ENCODE measurements at regions of chr3 and their contacts with region 1.

Region 1: GRCh38 chr3:69324362-69325025 is 61.4 kb downstream of the FRMD4B start:
- DNase-seq: peak; percentile 74
- H3K4me3 Mint-ChIP-seq: no peak overlapping the region
- H3K27ac Mint-ChIP-seq: peak overlapping the region; percentile 94
- H3K4me1 Mint-ChIP-seq: peaks cover 53% of the 10 kb centered on the region
- H3K27me3 Mint-ChIP-seq: no peaks in the 10 kb centered on the region

Region 2: GRCh38 chr3:69084326-69085167 is 239.9 kb before region 1 on chr3 and contains the start of gene ARL6IP5:
- intact Hi-C with region 1: loop called (anchors 2 kb)
- DNase-seq: peak; percentile 97
- H3K4me3 Mint-ChIP-seq: peak within 1 kb of the TSS; percentile 96
- H3K27ac Mint-ChIP-seq: peak within 1 kb of the TSS; percentile 95
- H3K4me1 Mint-ChIP-seq: peaks cover 45% of the 10 kb centered on the region
- H3K27me3 Mint-ChIP-seq: no peaks in the 10 kb centered on the region
- total RNA-seq, gene ARL6IP5: 118 and 122 TPM in 2 replicates

Region 3: DNA sequence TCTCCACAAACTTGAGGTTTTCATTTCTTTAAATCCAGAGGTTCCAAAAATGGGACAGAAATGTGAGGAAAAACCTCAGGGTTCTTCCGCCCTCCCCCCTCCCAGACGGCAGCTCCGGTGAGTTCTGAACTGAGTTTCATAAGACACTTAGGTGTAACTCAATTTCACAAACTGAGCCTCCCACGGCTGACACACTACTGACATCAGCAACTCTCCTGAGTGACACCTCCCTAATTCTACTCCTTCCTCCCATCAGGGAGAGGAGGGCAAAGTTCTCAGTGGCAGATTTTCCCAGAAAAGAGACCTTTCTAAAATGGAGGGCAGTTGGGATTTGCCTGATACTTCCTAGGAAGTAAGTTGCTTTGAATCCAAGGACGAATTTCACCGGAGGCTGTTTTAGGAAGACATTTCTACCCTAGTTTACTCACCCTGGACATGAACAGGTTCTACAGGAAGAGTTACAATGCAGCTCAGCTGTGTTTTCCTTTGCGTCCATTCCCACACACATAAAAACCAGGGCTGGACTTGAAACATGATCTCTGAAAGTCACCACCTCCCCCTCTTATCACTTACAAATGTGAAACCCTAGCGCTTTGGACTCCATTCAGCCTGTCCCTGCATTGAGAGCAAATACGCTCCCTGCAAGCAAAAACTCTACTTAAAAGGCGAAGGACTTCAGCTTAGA is 124.0 kb before region 1 on chr3:
- intact Hi-C with region 1: loop called (anchors 1 kb)
- DNase-seq: peak; percentile 83
- H3K4me3 Mint-ChIP-seq: peak overlapping the region; percentile 90
- H3K27ac Mint-ChIP-seq: peak overlapping the region; percentile 99
- H3K4me1 Mint-ChIP-seq: peaks cover 59% of the 10 kb centered on the region
- H3K27me3 Mint-ChIP-seq: no peaks in the 10 kb centered on the region

Region 4: DNA sequence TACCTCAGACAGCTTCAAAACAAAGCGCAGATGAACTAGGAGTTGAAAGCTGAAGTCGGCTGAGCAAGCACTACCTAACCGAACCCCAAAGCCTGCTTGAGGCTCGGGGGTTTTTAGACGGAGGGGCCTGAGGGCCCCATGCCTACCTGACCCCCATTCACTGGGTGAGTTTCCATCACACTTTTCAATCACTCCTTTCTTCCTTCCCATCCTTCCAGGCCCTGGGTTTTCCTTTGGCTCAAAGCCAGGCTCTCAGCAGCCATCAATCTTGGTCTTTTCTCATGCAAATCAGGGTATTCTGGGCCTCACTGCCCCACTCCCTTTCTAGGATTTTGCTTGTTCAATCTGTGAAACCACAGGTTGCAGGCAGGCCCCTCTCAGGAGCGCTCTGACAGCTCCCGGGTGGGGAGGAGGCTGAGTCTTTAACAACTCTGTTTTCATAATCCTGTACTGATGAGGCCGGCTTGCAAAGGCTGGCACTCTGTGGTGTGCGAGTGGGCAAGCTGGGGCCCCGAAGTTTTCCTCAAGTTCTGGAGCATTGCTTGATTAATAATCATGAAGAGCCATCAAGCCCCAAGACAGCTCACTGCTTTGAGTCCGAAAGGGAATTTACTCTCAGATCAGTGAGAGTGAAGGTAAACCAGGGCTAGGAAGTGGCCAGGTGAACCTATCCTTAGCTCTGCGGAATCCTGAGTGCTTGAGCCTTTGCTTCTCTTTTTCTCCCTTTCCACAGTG is 36.2 kb before region 1 on chr3:
- intact Hi-C with region 1: loop called (anchors 2 kb)
- DNase-seq: no peak
- H3K4me3 Mint-ChIP-seq: peak overlapping the region; percentile 16
- H3K27ac Mint-ChIP-seq: peak overlapping the region; percentile 58
- H3K4me1 Mint-ChIP-seq: peaks cover 10% of the 10 kb centered on the region
- H3K27me3 Mint-ChIP-seq: no peaks in the 10 kb centered on the region

Region 5: DNA sequence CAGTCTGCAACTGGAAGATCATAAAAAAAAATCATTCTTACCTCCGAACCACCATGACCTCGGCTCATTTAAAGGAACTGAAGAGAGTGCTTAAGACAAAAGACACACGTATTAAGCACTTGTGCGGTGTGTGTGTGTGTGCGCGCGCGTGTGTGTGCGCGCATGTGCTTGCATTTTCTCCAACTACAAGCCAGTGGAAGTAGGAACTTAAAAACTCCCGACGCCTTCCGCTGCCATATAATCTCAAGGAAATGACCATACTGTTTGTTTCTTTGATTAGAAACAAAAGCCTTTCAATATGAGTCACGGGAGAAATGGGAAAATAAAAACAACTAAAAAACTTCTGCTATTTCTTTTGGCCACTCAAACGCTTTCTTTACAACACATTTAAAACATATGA is 29.0 kb after region 1 on chr3:
- intact Hi-C with region 1: loop called (anchors 1 kb)
- DNase-seq: peak; percentile 63
- H3K4me3 Mint-ChIP-seq: peak overlapping the region; percentile 84
- H3K27ac Mint-ChIP-seq: peak overlapping the region; percentile 59
- H3K4me1 Mint-ChIP-seq: peaks cover 18% of the 10 kb centered on the region
- H3K27me3 Mint-ChIP-seq: peaks cover 11% of the 10 kb centered on the region

Region 6: GRCh38 chr3:69410250-69410649 is 85.8 kb after region 1 on chr3:
- intact Hi-C with region 1: loop called (anchors 1 kb)
- DNase-seq: peak; percentile 91
- H3K4me3 Mint-ChIP-seq: no peak overlapping the region
- H3K27ac Mint-ChIP-seq: no peak overlapping the region
- H3K4me1 Mint-ChIP-seq: peaks cover 11% of the 10 kb centered on the region
- H3K27me3 Mint-ChIP-seq: peaks cover 7% of the 10 kb centered on the region

Region 7: DNA sequence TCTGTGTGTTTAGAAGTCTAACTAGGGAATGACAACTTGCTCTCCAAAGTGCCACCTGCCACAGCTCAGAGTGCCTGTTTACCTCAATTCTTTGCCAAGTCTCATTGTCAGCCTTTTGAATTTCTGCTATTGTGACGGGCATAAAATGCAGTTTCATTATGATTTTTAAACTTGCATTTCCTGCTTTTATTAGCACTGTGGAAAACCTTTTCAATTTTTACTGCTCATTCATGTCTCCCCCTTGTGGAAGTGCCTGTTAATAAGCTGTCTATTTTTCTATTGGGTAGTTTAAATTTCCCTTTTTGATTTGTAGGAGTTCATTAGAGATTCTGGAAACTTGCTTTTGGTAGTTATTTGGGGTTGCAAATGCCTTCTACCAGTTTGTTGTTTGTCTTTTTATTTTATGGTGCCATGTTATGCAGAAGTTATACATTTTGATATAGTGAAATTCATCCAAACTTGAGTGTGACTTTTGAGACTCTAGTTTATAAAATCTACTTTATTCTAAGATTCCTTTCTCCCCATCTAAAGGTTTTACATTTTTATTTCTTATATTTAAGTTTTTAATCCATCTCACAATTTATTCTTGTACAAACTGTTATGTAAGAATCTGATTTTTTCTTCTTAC is 115.3 kb after region 1 on chr3:
- intact Hi-C with region 1: loop called (anchors 1 kb)
- DNase-seq: no peak
- H3K4me3 Mint-ChIP-seq: peak overlapping the region; percentile 13
- H3K27ac Mint-ChIP-seq: peak overlapping the region; percentile 4
- H3K4me1 Mint-ChIP-seq: peaks cover 35% of the 10 kb centered on the region
- H3K27me3 Mint-ChIP-seq: no peaks in the 10 kb centered on the region

Measured in activated CD4-positive, alpha-beta T cell treated with anti-CD3 and anti-CD28 coated beads, Interleukin-2, amount 10 ng/mL, durations not matched to agents 24 days and 14 days (primary cell).